Calu3 (cell line): ENCODE measurements at regions of chr17 and their contacts with region 1.

Region 1: GRCh38 chr17:39014044-39014794 is 47.0 kb upstream of the FBXO47 start:
- DNase-seq: peak; percentile 49
- H3K4me3 Mint-ChIP-seq: no peak overlapping the region
- H3K27ac Mint-ChIP-seq: peak overlapping the region; percentile 0
- H3K4me1 Mint-ChIP-seq: peaks cover 26% of the 10 kb centered on the region
- H3K27me3 Mint-ChIP-seq: peaks cover 11% of the 10 kb centered on the region
- CTCF ChIP-seq: no peak

Region 2: GRCh38 chr17:39077252-39077651 is 63.0 kb after region 1 on chr17:
- CTCF ChIA-PET with region 1: interaction called, 13 read pairs
- intact Hi-C with region 1: no loop called
- DNase-seq: no peak
- H3K4me3 Mint-ChIP-seq: no peak overlapping the region
- H3K27ac Mint-ChIP-seq: no peak overlapping the region
- H3K4me1 Mint-ChIP-seq: no peaks in the 10 kb centered on the region
- H3K27me3 Mint-ChIP-seq: peaks cover 87% of the 10 kb centered on the region
- CTCF ChIP-seq: no peak

Region 3: GRCh38 chr17:39294060-39294459 is 279.8 kb after region 1 on chr17:
- CTCF ChIA-PET with region 1: no interaction called
- intact Hi-C with region 1: no loop called
- DNase-seq: no peak
- H3K4me3 Mint-ChIP-seq: no peak overlapping the region
- H3K27ac Mint-ChIP-seq: no peak overlapping the region
- H3K4me1 Mint-ChIP-seq: no peaks in the 10 kb centered on the region
- H3K27me3 Mint-ChIP-seq: no peaks in the 10 kb centered on the region
- CTCF ChIP-seq: no peak